GM12878 (cell line): ENCODE measurements at regions of chr6 and their contacts with region 1.

Region 1: GRCh38 chr6:4155848-4156466 is 20.6 kb upstream of the ECI2 start:
- DNase-seq: no peak
- ATAC-seq: peak; percentile 98
- H3K4me3 ChIP-seq: no peak overlapping the region
- H3K27ac ChIP-seq: no peak overlapping the region
- H3K4me1 ChIP-seq: no peaks in the 10 kb centered on the region
- H3K27me3 ChIP-seq: no peaks in the 10 kb centered on the region
- CTCF ChIP-seq: peak; percentile 74 to 87 (median 79)
- EP300 ChIP-seq: no peak
- POLR2A ChIP-seq: no peak
- RAD21 ChIP-seq: peak; percentile 89

Region 2: GRCh38 chr6:3748208-3749066 is 407.5 kb before region 1 on chr6:
- CTCF ChIA-PET with region 1: interaction called, 22 read pairs
- POLR2A ChIA-PET with region 1: no interaction called
- RAD21 ChIA-PET with region 1: interaction called, 7 read pairs
- SMC1A ChIA-PET with region 1: interaction called, 9 read pairs
- in situ Hi-C with region 1: loop called (anchors 5 kb)
- intact Hi-C with region 1: no loop called
- DNase-seq: no peak
- ATAC-seq: peak; percentile 60
- H3K4me3 ChIP-seq: no peak overlapping the region
- H3K27ac ChIP-seq: no peak overlapping the region
- H3K4me1 ChIP-seq: no peaks in the 10 kb centered on the region; the same call in none of the 2 replicates
- H3K27me3 ChIP-seq: peaks cover 8 to 22% of the 10 kb centered on the region in 2 experiments
- CTCF ChIP-seq: peak; percentile 53 to 72 (median 55)
- EP300 ChIP-seq: no peak
- POLR2A ChIP-seq: no peak
- RAD21 ChIP-seq: peak; percentile 62

Region 3: DNA sequence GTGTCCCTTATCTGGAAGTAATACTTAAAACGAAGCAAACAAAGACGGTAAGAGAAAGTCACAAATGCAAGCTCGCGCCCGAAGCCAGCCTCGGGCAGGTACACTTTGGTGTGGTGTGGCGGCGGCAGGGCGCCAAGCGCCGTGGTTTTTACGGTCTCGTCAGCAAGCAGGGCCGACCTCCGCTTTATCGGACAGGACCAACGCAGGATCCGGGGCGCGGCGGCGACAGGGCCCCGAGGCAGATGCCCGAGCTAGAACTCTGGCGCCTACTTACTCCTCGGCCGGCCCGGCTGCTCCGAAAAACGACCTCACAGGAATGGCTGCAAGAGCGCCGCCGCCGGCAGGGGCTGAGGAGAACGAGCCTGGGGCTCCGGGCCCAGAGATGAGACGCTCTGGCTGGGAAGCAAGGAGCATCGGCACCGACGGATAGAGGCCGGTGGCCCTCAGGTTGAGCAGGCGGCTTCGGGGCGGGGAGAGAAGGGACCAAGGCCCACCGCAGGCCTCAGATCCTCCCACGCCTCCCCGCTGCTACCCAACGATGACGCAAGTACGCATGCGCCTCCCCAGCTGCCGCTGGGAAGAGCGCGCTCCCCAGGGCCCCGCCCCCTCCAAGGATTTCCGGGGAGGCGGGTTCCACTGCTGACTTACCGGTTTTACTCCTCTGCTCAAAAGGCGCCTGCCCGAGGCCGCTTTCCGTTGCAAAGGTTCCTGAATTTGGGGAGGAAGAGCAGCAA is 137.6 kb before region 1 on chr6:
- CTCF ChIA-PET with region 1: interaction called, 23 read pairs
- POLR2A ChIA-PET with region 1: no interaction called
- RAD21 ChIA-PET with region 1: interaction called, 15 read pairs
- SMC1A ChIA-PET with region 1: interaction called, 10 read pairs
- in situ Hi-C with region 1: no loop called
- intact Hi-C with region 1: no loop called
- DNase-seq: peak; percentile 87
- ATAC-seq: peak; percentile 75
- H3K4me3 ChIP-seq: peak overlapping the region; percentile 67
- H3K27ac ChIP-seq: peak overlapping the region; percentile 91
- H3K4me1 ChIP-seq: peaks cover 4% of the 10 kb centered on the region; the same call in 1 of the 2 replicates
- H3K27me3 ChIP-seq: no peaks in the 10 kb centered on the region
- CTCF ChIP-seq: peak; percentile 13 to 29 (median 18); a peak in 1 of 6 replicates
- EP300 ChIP-seq: no peak; a peak in 1 of 4 replicates
- POLR2A ChIP-seq: peak; percentile 95
- RAD21 ChIP-seq: no peak

Region 4: GRCh38 chr6:4066029-4066755 is 89.8 kb before region 1 on chr6:
- CTCF ChIA-PET with region 1: interaction called, 7 read pairs
- POLR2A ChIA-PET with region 1: no interaction called
- RAD21 ChIA-PET with region 1: interaction called, 3 read pairs
- SMC1A ChIA-PET with region 1: interaction called, 8 read pairs
- in situ Hi-C with region 1: no loop called
- intact Hi-C with region 1: loop called (anchors 5 kb)
- DNase-seq: no peak
- ATAC-seq: no peak
- H3K4me3 ChIP-seq: no peak overlapping the region
- H3K27ac ChIP-seq: no peak overlapping the region
- H3K4me1 ChIP-seq: no peaks in the 10 kb centered on the region
- H3K27me3 ChIP-seq: no peaks in the 10 kb centered on the region
- CTCF ChIP-seq: no peak
- EP300 ChIP-seq: no peak
- POLR2A ChIP-seq: peak; percentile 42; the same call in 1 of the 2 replicates
- RAD21 ChIP-seq: no peak

Region 5: GRCh38 chr6:4145083-4145482 is 10.9 kb before region 1 on chr6:
- CTCF ChIA-PET with region 1: interaction called, 10 read pairs
- POLR2A ChIA-PET with region 1: no interaction called
- RAD21 ChIA-PET with region 1: interaction called, 25 read pairs
- SMC1A ChIA-PET with region 1: interaction called, 83 read pairs
- in situ Hi-C with region 1: no loop called
- intact Hi-C with region 1: no loop called
- DNase-seq: no peak
- ATAC-seq: no peak
- H3K4me3 ChIP-seq: no peak overlapping the region
- H3K27ac ChIP-seq: no peak overlapping the region
- H3K4me1 ChIP-seq: no peaks in the 10 kb centered on the region
- H3K27me3 ChIP-seq: no peaks in the 10 kb centered on the region
- CTCF ChIP-seq: no peak
- EP300 ChIP-seq: no peak
- POLR2A ChIP-seq: no peak
- RAD21 ChIP-seq: no peak

Region 6: GRCh38 chr6:4192173-4192572 is 36.2 kb after region 1 on chr6:
- CTCF ChIA-PET with region 1: no interaction called
- POLR2A ChIA-PET with region 1: no interaction called
- RAD21 ChIA-PET with region 1: no interaction called
- SMC1A ChIA-PET with region 1: no interaction called
- in situ Hi-C with region 1: no loop called
- intact Hi-C with region 1: no loop called
- DNase-seq: no peak
- ATAC-seq: no peak
- H3K4me3 ChIP-seq: no peak overlapping the region
- H3K27ac ChIP-seq: no peak overlapping the region
- H3K4me1 ChIP-seq: no peaks in the 10 kb centered on the region
- H3K27me3 ChIP-seq: no peaks in the 10 kb centered on the region
- CTCF ChIP-seq: no peak
- EP300 ChIP-seq: no peak
- POLR2A ChIP-seq: no peak
- RAD21 ChIP-seq: no peak